ENCODE measurements at regions of chr16 and their contacts with region 1.

Region 1: GRCh38 chr16:11742539-11743307 is at the start of gene TXNDC11:
- DNase-seq: peak; percentile 100
- total RNA-seq, gene TXNDC11: 27.0 TPM

Region 2: GRCh38 chr16:11797166-11797956 is 54.6 kb after region 1 on chr16 and contains the start of gene ZC3H7A:
- intact Hi-C with region 1: loop called (anchors 2 kb)
- DNase-seq: peak; percentile 99
- total RNA-seq, gene ZC3H7A: 33.4 TPM

Region 3: GRCh38 chr16:11851294-11852091 is 108.8 kb after region 1 on chr16 and contains the start of gene RSL1D1:
- intact Hi-C with region 1: loop called (anchors 1 kb)
- DNase-seq: peak; percentile 97
- total RNA-seq, gene RSL1D1: 77.9 TPM

Measured in cardiac septum (tissue), 1 donor.